Thyroid gland (tissue), 4 donors: ENCODE measurements at regions of chr5 and their contacts with region 1.

Region 1: DNA sequence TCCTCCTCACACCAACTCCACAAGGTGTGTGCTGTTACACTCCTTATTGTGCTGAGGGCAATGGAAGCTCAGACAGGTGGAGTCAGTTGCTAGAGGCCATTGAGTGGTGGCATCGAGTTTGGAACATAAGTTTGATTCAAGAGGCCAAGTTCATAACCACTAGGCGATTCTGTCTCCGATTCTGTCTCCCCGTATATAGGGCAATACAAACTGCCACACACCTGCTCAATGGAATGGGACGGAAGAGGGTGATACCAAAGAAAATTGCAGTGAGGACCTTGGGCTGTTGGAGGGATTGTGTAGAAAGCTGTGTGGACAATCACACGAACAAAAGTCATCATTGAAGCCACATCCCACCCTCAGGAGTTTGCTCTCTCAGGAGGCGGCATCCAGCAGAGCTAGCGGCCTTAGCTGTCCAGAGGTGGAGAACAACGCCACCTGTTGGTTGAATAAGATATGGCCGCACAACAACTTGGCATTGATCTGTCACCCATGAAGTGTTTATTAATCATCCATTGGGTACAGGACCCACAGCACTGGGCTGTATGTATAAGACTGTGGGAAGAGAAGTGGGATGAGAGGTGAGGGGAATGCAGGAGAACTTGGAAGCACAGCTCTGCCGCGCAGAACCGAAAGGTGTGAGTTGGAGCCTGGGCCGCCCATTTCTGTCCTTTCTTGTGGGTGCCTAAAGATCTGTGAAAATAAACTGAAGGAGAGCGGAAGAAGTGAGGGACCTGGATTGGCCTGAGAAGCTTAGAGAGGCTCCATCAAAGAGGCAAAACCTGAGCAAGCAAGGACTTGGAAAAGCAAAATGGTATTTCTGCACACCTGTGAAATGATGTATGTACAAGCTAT is 16.1 kb upstream of the NEUROG1 start:
- DNase-seq: peak; percentile 67 to 70
- H3K4me3 ChIP-seq: no peak overlapping the region
- H3K27ac ChIP-seq: no peak overlapping the region
- H3K4me1 ChIP-seq: peaks cover 0 to 2% of the 10 kb centered on the region in 2 donors
- H3K27me3 ChIP-seq: peaks cover 6% of the 10 kb centered on the region
- CTCF ChIP-seq: peak in 5 of 6 experiments; percentile 72 to 85 (median 77)
- POLR2A ChIP-seq: no peak

Region 2: DNA sequence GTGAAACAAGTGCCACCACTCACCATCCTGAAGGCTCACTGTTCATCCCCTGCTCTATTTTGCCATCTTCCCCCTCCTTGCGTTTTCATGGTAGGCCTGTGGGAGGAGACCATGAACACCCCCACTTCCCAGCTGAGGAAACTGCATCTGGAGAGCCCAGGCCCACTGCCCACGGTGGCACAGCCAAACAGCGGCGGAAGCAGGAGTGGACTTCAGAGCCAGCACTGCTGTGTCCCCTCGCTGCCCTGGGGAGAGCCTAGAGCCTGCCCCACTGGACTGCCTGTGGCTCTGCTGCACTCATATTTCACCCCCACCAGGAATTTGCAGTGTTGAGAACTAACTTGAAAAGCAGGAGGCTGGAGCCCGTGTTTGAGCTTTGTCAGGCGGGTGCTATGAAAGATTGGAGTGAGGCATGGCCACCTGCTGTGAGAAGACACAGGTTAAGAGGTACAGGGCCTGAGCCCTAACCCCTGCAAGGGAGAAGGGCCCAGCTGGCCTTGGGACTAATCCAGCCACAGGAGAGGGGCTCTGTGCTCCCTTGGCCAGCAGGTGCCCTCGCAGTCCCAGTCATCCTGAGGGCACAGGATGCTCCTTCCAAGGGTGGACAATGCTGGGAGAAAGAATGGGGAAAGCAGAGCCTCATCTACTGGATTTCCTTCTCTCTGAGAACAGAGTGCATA is 231.8 kb before region 1 on chr5:
- intact Hi-C with region 1: no loop called
- DNase-seq: no peak
- H3K4me3 ChIP-seq: no peak overlapping the region
- H3K27ac ChIP-seq: no peak overlapping the region
- H3K4me1 ChIP-seq: no peaks in the 10 kb centered on the region
- H3K27me3 ChIP-seq: no peaks in the 10 kb centered on the region
- CTCF ChIP-seq: no peak
- POLR2A ChIP-seq: no peak

Region 3: GRCh38 chr5:135466178-135467050 is 85.4 kb before region 1 on chr5:
- intact Hi-C with region 1: loop called (anchors 2 kb)
- DNase-seq: peak; percentile 71 to 77
- H3K4me3 ChIP-seq: no peak overlapping the region
- H3K27ac ChIP-seq: no peak overlapping the region
- H3K4me1 ChIP-seq: peaks cover 3 to 7% of the 10 kb centered on the region in 2 donors
- H3K27me3 ChIP-seq: peaks cover 20% of the 10 kb centered on the region
- CTCF ChIP-seq: peak; percentile 63 to 93 (median 79)
- POLR2A ChIP-seq: no peak